ENCODE measurements at regions of chr1 and their contacts with region 1.

Region 1: GRCh38 chr1:22131875-22132486 is 10.9 kb downstream of the WNT4 start:
- DNase-seq: peak; percentile 67
- H3K4me3 Mint-ChIP-seq: no peak overlapping the region
- H3K27ac Mint-ChIP-seq: no peak overlapping the region
- H3K4me1 Mint-ChIP-seq: no peaks in the 10 kb centered on the region
- H3K27me3 Mint-ChIP-seq: no peaks in the 10 kb centered on the region

Region 2: GRCh38 chr1:22275721-22276395 is 143.9 kb after region 1 on chr1:
- CTCF ChIA-PET with region 1: no interaction called
- POLR2A ChIA-PET with region 1: no interaction called
- intact Hi-C with region 1: loop called (anchors 1 kb)
- DNase-seq: peak; percentile 60
- H3K4me3 Mint-ChIP-seq: no peak overlapping the region
- H3K27ac Mint-ChIP-seq: no peak overlapping the region
- H3K4me1 Mint-ChIP-seq: no peaks in the 10 kb centered on the region
- H3K27me3 Mint-ChIP-seq: peaks cover 9% of the 10 kb centered on the region

Measured in activated CD4-positive, alpha-beta memory T cell treated with anti-CD3 and anti-CD28 coated beads for 36 hours (primary cell).